Panc1 (cell line): ENCODE measurements at regions of chr6 and their contacts with region 1.

Region 1: DNA sequence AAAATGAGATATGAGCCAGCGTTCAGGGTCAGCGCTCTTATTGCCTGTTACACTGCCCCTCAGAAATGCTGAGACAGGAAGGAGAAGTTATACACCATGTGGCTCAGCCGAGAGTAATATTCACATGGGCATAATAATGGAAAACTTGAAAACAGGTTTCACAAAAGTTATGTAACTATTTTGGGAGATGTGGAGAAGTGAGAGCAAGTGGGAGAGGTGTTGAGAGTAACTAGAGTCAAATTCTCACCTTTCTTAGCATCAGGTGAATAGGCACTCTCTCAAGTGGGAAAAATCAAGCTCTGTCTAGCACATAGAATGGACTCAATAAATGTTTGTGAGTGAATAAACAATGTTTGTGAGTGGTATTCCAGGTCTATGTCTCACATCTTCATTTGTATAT is 94.5 kb downstream of the TBX18 start:
- DNase-seq: no peak
- ATAC-seq: no peak
- H3K4me3 ChIP-seq: no peak overlapping the region
- H3K27ac ChIP-seq: no peak overlapping the region
- H3K4me1 ChIP-seq: no peaks in the 10 kb centered on the region
- H3K27me3 ChIP-seq: no peaks in the 10 kb centered on the region
- CTCF ChIP-seq: no peak

Region 2: GRCh38 chr6:84403545-84403944 is 266.4 kb before region 1 on chr6:
- CTCF ChIA-PET with region 1: no interaction called
- POLR2A ChIA-PET with region 1: interaction called, 16 read pairs
- in situ Hi-C with region 1: no loop called
- intact Hi-C with region 1: no loop called
- DNase-seq: no peak
- ATAC-seq: no peak
- H3K4me3 ChIP-seq: no peak overlapping the region
- H3K27ac ChIP-seq: no peak overlapping the region
- H3K4me1 ChIP-seq: no peaks in the 10 kb centered on the region
- H3K27me3 ChIP-seq: no peaks in the 10 kb centered on the region
- CTCF ChIP-seq: no peak